Vagina (tissue), 2 donors: ENCODE measurements at regions of chr20 and their contacts with region 1.

Region 1: DNA sequence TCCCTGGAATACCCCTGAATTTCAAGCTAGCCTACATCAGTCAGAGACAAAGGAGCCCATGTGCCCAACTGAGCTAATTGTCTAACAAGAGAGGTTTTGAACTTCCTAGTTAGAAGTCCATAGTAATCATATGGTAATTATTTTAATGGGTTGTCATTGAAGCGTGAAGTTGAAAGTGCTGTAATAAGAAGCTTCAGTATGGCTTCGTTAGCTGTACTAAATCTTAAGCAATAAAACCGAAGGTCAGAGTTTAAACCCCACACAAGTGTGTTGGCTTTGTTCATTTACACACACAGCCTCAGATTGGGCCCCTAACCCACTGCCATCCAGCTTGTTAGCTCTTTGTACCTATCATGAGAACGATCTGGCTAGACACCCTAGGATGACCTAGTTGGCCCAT is 195.6 kb upstream of the RIN2 start:
- DNase-seq: no peak
- H3K4me3 ChIP-seq: no peak overlapping the region
- H3K27ac ChIP-seq: no peak overlapping the region
- H3K4me1 ChIP-seq: peaks cover 9% of the 10 kb centered on the region
- H3K27me3 ChIP-seq: no peaks in the 10 kb centered on the region
- CTCF ChIP-seq: no peak
- POLR2A ChIP-seq: no peak

Region 2: GRCh38 chr20:19497064-19497463 is 65.4 kb before region 1 on chr20:
- intact Hi-C with region 1: loop called (anchors 2 kb)
- DNase-seq: no peak
- H3K4me3 ChIP-seq: no peak overlapping the region
- H3K27ac ChIP-seq: no peak overlapping the region
- H3K4me1 ChIP-seq: no peaks in the 10 kb centered on the region
- H3K27me3 ChIP-seq: no peaks in the 10 kb centered on the region
- CTCF ChIP-seq: no peak
- POLR2A ChIP-seq: no peak

Region 3: DNA sequence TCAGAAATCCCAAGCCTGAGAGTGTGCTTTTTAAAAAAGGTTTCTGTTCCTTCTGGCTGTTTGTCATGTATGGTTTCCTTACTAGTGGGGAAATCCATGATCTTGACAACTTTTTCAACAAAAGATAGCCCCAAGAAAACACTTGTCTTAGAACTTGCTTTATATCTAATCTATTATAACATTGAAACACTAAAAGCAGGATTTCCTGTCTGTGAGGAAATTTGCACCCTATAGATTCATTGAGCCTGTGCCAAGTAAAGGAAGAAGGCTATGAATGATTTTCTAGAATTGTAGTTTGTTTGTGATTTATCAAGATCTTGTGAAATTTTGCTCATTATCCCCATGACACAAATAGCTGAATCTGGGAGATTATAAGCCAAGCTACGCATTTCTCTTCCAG is 43.0 kb before region 1 on chr20:
- intact Hi-C with region 1: loop called (anchors 1 kb)
- DNase-seq: no peak
- H3K4me3 ChIP-seq: no peak overlapping the region
- H3K27ac ChIP-seq: no peak overlapping the region
- H3K4me1 ChIP-seq: no peaks in the 10 kb centered on the region
- H3K27me3 ChIP-seq: no peaks in the 10 kb centered on the region
- CTCF ChIP-seq: no peak
- POLR2A ChIP-seq: no peak

Region 4: DNA sequence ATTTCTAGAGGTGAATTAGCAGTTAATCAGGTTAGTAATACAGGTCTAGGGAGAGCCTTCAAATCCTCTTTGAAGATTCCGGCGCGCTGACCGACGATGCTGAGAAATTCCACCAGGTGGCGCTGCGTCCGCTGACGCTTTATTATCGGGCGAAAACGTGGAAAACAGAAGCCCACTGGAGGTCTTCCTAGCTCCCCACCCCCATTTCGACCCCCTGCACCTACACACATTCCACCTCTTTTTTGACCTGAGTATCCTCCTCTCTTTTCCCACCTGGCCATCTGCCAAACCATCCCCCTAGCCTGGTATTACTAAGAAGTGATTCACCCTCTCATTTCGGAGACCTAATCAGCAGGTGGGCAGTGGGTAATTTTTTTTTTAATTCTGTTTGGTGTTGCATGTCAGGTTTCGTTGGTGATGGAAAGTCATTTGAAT is 130.3 kb after region 1 on chr20:
- intact Hi-C with region 1: no loop called
- DNase-seq: no peak
- H3K4me3 ChIP-seq: no peak overlapping the region
- H3K27ac ChIP-seq: no peak overlapping the region
- H3K4me1 ChIP-seq: peaks cover 6% of the 10 kb centered on the region
- H3K27me3 ChIP-seq: no peaks in the 10 kb centered on the region
- CTCF ChIP-seq: peak; percentile 69 to 94 (median 94)
- POLR2A ChIP-seq: no peak

Region 5: GRCh38 chr20:20915835-20916234 is 1353.4 kb after region 1 on chr20:
- intact Hi-C with region 1: no loop called
- DNase-seq: peak in 1 of 2 donors; percentile 5
- H3K4me3 ChIP-seq: no peak overlapping the region
- H3K27ac ChIP-seq: no peak overlapping the region
- H3K4me1 ChIP-seq: no peaks in the 10 kb centered on the region
- H3K27me3 ChIP-seq: no peaks in the 10 kb centered on the region
- CTCF ChIP-seq: no peak
- POLR2A ChIP-seq: no peak